Tibial artery (tissue), 4 donors: ENCODE measurements at regions of chr1 and their contacts with region 1.

Region 1: DNA sequence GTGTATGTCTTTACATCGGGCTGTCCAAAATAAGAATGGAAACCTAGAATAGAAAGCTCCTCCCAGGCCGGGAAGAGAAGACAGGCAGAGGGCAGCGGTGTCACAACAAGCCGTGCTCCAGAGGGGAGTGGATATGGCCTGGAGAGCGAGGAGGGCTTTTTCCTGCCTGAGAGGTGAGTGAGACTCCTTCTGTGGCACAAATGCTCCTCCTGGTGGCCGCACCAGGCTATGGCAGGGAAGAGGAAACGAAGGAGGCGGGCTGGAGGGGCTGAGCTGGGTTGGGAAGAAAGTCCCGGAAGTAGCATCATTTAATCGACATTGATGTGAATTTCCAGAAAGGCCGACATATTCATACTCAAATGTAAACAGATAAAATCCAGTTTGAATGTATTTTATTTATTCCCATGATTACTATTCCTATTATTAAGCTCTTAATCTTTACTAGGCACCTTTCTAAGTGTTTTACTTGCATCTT is 54.7 kb downstream of the MEF2D start:
- DNase-seq: peak; percentile 79 to 85
- H3K4me3 ChIP-seq: no peak overlapping the region
- H3K27ac ChIP-seq: no peak overlapping the region
- H3K4me1 ChIP-seq: peaks cover 0 to 7% (median 3%) of the 10 kb centered on the region in 4 donors
- H3K27me3 ChIP-seq: peaks cover 3 to 52% of the 10 kb centered on the region in 2 donors
- CTCF ChIP-seq: peak; percentile 90 to 93

Region 2: GRCh38 chr1:156385534-156386031 is 60.2 kb before region 1 on chr1:
- intact Hi-C with region 1: loop called (anchors 2 kb)
- DNase-seq: peak in 1 of 2 donors; percentile 57
- H3K4me3 ChIP-seq: no peak overlapping the region
- H3K27ac ChIP-seq: no peak overlapping the region
- H3K4me1 ChIP-seq: peaks cover 0 to 9% (median 0%) of the 10 kb centered on the region in 4 donors
- H3K27me3 ChIP-seq: peaks cover 0 to 52% of the 10 kb centered on the region in 2 donors
- CTCF ChIP-seq: peak; percentile 86 to 93